ENCODE measurements at regions of chr5 and their contacts with region 1.

Region 1: GRCh38 chr5:19058216-19058615 is 929.8 kb downstream of the CDH18 start:
- DNase-seq: no peak
- ATAC-seq: no peak
- H3K4me3 ChIP-seq: no peak overlapping the region
- H3K4me3 Mint-ChIP-seq: no peak overlapping the region
- H3K27ac ChIP-seq: no peak overlapping the region
- H3K27ac Mint-ChIP-seq: no peak overlapping the region
- H3K4me1 ChIP-seq: no peaks in the 10 kb centered on the region
- H3K4me1 Mint-ChIP-seq: no peaks in the 10 kb centered on the region
- H3K27me3 ChIP-seq: no peaks in the 10 kb centered on the region
- H3K27me3 Mint-ChIP-seq: no peaks in the 10 kb centered on the region

Region 2: DNA sequence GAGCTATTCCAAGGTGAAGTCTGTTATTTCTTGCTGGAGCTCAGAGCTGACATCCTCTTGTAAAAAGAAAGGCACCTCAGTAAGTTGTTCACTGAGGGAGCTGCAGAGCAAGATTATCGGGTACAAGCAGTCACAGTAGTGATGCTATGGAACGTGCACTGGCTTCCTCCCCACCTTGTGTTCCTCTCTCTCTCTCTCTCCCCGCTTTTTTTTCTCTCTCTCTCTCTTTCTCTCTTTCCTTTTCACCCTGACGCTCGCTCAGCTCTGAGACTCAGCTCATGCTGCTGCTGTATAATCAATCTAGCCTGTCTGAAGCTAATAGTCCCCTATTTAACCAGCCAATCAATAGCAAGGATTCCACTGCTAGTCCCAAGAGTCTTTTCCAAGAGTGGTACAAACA is 1517.4 kb after region 1 on chr5:
- CTCF ChIA-PET with region 1: no interaction called
- POLR2A ChIA-PET with region 1: interaction called in 1 of 2 experiments, 10 read pairs
- DNase-seq: no peak
- ATAC-seq: no peak
- H3K4me3 ChIP-seq: no peak overlapping the region
- H3K4me3 Mint-ChIP-seq: no peak overlapping the region
- H3K27ac ChIP-seq: no peak overlapping the region
- H3K27ac Mint-ChIP-seq: no peak overlapping the region
- H3K4me1 ChIP-seq: no peaks in the 10 kb centered on the region
- H3K4me1 Mint-ChIP-seq: no peaks in the 10 kb centered on the region
- H3K27me3 ChIP-seq: no peaks in the 10 kb centered on the region
- H3K27me3 Mint-ChIP-seq: no peaks in the 10 kb centered on the region

Measured in T-cell (primary cell).